Endothelial cell of umbilical vein (primary cell): ENCODE measurements at regions of chr6 and their contacts with region 1.

Region 1: GRCh38 chr6:53794720-53795253 is at the start of gene LRRC1:
- DNase-seq: peak; percentile 95
- H3K4me3 ChIP-seq: peak within 1 kb of the TSS; percentile 58 to 76 (median 72)
- H3K27ac ChIP-seq: peak within 1 kb of the TSS; percentile 43
- H3K4me1 ChIP-seq: peaks cover 25% of the 10 kb centered on the region
- H3K27me3 ChIP-seq: no peaks in the 10 kb centered on the region
- CTCF ChIP-seq: no peak
- POLR2A ChIP-seq: peak; percentile 83
- total RNA-seq, gene LRRC1: 10.6 and 11.7 TPM in 2 replicates

Region 2: DNA sequence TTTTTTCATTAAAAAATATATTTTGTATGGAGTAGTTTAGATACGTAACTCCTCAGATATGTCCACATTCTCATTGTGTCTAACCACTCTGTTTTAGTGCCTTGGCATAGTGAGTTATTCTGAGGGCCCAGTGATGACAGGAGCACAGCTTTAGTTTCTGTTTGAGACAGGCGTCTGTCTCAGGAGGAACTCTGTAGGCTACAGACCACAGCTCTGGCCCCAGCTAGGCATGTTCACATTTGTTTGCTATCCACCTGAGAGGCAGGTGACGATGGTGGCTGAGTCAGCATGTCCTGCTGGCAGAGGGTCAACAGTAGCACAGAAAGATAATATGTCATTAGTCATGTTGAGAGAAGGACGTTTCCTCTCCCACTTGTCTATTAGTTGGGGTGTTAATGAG is 16.3 kb after region 1 on chr6:
- CTCF ChIA-PET with region 1: interaction called, 21 read pairs
- POLR2A ChIA-PET with region 1: interaction called, 3 read pairs
- dilution Hi-C with region 1: no loop called
- intact Hi-C with region 1: loop called (anchors 2 kb)
- DNase-seq: no peak
- H3K4me3 ChIP-seq: no peak overlapping the region
- H3K27ac ChIP-seq: no peak overlapping the region
- H3K4me1 ChIP-seq: peaks cover 19% of the 10 kb centered on the region
- H3K27me3 ChIP-seq: no peaks in the 10 kb centered on the region
- CTCF ChIP-seq: no peak
- POLR2A ChIP-seq: no peak

Region 3: DNA sequence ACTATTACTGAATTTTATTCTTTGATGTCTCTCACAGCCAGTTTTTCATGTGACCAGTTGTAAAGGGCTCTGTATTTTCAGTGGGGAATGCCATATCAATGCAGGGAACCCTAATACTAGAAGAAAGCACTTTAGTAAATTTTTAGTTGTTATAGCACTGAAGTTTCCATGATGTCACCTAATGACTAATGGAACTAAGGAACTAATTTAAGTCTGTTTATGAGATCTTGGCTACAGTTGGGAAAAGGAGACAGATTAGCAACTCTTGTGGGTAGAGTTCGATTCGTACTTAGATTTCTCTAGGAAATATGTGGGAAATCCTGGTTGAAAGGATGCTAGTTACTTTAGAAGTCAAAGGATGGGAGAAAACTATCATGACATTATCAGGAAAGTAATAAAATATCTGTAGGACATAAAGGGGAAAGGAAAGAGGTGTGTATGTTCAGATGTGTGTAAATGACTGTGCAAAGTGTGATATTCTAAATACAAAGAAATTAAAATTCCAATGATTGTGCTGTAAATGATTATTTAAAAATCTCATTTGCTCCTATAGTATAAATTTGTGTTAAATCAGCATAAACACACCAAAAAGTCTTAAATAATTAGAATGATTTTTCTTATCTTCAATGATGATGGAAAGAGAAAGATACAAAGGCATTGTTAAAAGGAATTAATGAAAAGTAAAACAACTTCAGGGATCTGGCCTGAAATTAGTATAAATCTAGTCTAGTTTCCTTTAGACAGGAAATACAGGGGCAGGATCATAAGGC is 103.4 kb after region 1 on chr6:
- CTCF ChIA-PET with region 1: interaction called, 9 read pairs
- POLR2A ChIA-PET with region 1: no interaction called
- dilution Hi-C with region 1: no loop called
- intact Hi-C with region 1: loop called (anchors 1 kb)
- DNase-seq: peak; percentile 45
- H3K4me3 ChIP-seq: no peak overlapping the region
- H3K27ac ChIP-seq: no peak overlapping the region
- H3K4me1 ChIP-seq: peaks cover 20% of the 10 kb centered on the region
- H3K27me3 ChIP-seq: no peaks in the 10 kb centered on the region
- CTCF ChIP-seq: no peak
- POLR2A ChIP-seq: no peak

Region 4: DNA sequence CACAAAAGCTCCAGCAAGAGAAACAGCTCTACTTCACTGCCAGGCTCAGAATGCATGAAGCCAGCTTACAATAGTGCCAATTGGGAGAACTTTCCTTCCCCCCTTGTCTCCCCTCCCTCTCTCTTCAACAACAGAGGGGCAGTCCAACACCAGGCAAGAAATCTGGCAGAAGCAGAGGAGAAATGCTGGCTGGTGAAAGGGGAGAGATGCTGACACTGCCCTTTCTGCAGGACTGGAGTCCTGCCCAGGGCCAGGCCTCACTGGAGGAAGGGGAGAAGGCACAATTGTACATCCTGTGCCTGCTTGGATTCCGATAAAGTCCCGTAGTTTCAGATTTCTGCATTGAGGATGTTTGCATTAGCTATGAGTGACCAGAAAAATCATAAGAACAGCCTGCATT is 148.6 kb after region 1 on chr6:
- CTCF ChIA-PET with region 1: interaction called, 15 read pairs
- POLR2A ChIA-PET with region 1: interaction called, 3 read pairs
- dilution Hi-C with region 1: no loop called
- intact Hi-C with region 1: loop called (anchors 5 kb)
- DNase-seq: peak; percentile 77
- H3K4me3 ChIP-seq: no peak overlapping the region
- H3K27ac ChIP-seq: no peak overlapping the region
- H3K4me1 ChIP-seq: peaks cover 6% of the 10 kb centered on the region
- H3K27me3 ChIP-seq: no peaks in the 10 kb centered on the region
- CTCF ChIP-seq: no peak
- POLR2A ChIP-seq: no peak

Region 5: DNA sequence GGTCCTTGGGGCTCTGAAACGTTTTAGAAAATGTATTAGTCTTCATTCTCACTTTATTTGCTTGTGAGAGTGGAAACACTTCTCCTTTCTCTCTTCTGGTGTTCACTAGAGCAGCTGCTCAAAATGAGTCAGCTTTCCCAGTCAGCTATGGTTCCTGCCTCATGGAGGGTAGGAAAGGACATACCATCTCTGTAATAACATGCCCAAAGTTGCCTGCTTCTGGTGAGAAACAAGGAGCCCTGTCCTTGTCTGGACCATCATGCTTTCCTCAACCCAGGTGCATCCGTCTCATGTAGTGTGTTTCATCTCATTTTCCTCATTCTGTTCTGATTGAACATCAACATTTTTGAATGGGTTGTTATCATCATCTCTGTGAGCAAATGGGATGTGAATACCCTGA is 496.4 kb after region 1 on chr6:
- CTCF ChIA-PET with region 1: no interaction called
- POLR2A ChIA-PET with region 1: no interaction called
- dilution Hi-C with region 1: no loop called
- intact Hi-C with region 1: no loop called
- DNase-seq: peak; percentile 94
- H3K4me3 ChIP-seq: no peak overlapping the region
- H3K27ac ChIP-seq: peak overlapping the region; percentile 95
- H3K4me1 ChIP-seq: peaks cover 33% of the 10 kb centered on the region
- H3K27me3 ChIP-seq: no peaks in the 10 kb centered on the region
- CTCF ChIP-seq: no peak
- POLR2A ChIP-seq: peak; percentile 22